GM10248 (cell line): ENCODE measurements at regions of chr10 and their contacts with region 1.

Region 1: GRCh38 chr10:69061305-69062161 is 26.4 kb upstream of the SRGN start:
- DNase-seq: peak; percentile 44
- CTCF ChIP-seq: no peak

Region 2: GRCh38 chr10:69045441-69046300 is 15.9 kb before region 1 on chr10:
- CTCF ChIA-PET with region 1: interaction called, 96 read pairs
- POLR2A ChIA-PET with region 1: interaction called, 6 read pairs
- DNase-seq: peak; percentile 72
- CTCF ChIP-seq: no peak

Region 3: GRCh38 chr10:69080226-69080625 is 18.7 kb after region 1 on chr10:
- CTCF ChIA-PET with region 1: interaction called, 18 read pairs
- POLR2A ChIA-PET with region 1: no interaction called
- DNase-seq: no peak
- CTCF ChIP-seq: no peak

Region 4: DNA sequence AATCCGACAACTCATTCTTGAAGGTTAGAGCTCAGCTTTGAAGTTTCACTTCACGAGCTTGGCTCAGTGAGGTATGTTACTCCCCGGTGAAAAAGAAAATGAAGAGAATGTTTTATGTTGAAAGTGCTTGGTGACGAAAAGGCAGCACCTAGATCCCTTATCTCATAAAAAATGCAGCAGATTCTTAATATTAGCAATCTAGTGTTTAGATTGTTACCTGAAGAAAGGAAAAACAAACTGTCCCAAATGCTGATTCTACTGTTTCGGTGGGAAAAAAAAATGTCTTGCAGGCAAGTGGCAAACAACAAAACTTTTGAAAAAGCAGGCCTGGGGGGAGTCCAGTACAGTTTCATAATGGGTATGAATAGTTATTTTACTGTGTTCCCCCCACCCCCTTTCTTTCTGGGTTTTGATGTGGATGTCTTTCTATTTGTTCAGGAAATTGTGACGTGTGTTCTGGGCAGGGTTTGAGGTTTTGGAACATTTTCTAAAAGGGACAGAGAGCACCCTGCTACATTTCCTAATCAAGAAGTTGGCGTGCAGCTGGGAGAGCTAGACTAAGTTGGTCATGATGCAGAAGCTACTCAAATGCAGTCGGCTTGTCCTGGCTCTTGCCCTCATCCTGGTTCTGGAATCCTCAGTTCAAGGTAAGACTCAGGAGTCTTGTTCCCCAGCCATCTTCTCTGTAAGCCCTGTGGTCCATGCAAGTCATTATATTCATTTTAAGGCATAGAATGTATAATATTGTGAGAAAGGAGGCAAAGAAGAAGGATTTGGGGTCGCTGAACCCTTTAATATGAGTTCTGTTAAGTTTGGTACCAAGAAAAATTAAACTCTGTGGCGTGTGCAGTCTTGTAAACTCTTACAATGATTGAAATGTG is 26.3 kb after region 1 on chr10 and contains the start of gene SRGN:
- CTCF ChIA-PET with region 1: interaction called, 7 read pairs
- POLR2A ChIA-PET with region 1: interaction called, 23 read pairs
- DNase-seq: peak; percentile 72
- CTCF ChIP-seq: no peak

Region 5: GRCh38 chr10:69092959-69093850 is 31.7 kb after region 1 on chr10:
- CTCF ChIA-PET with region 1: interaction called, 12 read pairs
- POLR2A ChIA-PET with region 1: interaction called, 23 read pairs
- DNase-seq: peak; percentile 64
- CTCF ChIP-seq: peak; percentile 58

Region 6: GRCh38 chr10:69119896-69120295 is 58.4 kb after region 1 on chr10:
- CTCF ChIA-PET with region 1: no interaction called
- POLR2A ChIA-PET with region 1: no interaction called
- DNase-seq: no peak
- CTCF ChIP-seq: no peak